Caco-2 (cell line): ENCODE measurements at regions of chr2 and their contacts with region 1.

Region 1: DNA sequence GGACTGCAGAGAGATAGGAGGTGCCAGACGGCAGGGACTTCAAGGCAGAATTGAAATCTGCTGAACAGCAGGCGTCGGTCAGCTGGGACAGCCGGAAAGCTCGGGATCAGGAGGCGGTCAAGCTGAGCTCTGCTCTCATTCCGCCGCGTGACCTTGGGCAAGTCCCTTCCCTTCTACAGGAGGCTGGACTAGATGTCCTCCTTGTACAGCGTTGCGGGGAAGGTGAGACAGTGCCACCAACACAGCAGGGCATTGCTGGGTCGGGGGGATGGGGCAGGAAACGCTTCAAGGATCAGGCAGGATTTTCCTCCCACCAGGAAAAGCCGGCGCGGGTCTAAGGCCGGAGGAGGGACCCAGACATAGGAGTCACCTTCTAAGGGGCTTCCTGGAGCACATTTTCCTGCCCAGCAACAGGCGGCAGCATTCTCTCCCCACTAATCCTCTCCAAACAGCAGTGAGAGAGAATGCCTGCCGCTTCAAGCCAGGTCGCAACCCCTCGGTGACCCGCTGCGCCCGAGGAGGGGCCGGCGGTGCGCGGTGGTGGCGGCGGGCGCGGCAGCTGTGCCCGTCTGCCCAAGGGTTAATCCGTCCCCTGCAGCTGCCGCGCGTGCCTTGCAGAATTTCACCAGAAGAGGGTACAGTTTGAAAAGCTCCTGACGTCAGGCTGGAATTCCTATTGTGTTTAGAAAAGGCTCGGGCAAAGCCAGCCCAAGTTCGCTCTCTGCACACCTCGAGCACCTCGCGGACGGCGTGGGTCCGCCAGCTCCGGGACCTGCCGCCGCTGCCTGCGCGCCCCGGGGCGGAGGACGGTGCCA is at the start of gene KCNF1:
- DNase-seq: peak; percentile 64 to 72
- H3K4me3 ChIP-seq: peak within 1 kb of the TSS; percentile 42
- H3K4me3 Mint-ChIP-seq: peak within 1 kb of the TSS; percentile 58
- H3K27ac Mint-ChIP-seq: no peak within 1 kb of the TSS
- H3K4me1 ChIP-seq: no peaks in the 10 kb centered on the region
- H3K4me1 Mint-ChIP-seq: peaks cover 7% of the 10 kb centered on the region
- H3K27me3 ChIP-seq: no peaks in the 10 kb centered on the region
- H3K27me3 Mint-ChIP-seq: peaks cover 10% of the 10 kb centered on the region
- CTCF ChIP-seq: peak; percentile 25 to 26
- total RNA-seq, gene KCNF1: 0.28 and 0.29 TPM in 2 replicates

Region 2: GRCh38 chr2:10891390-10891789 is 20.1 kb before region 1 on chr2:
- CTCF ChIA-PET with region 1: interaction called, 10 read pairs
- POLR2A ChIA-PET with region 1: no interaction called
- intact Hi-C with region 1: no loop called
- DNase-seq: no peak
- H3K4me3 ChIP-seq: no peak overlapping the region
- H3K4me3 Mint-ChIP-seq: no peak overlapping the region
- H3K27ac Mint-ChIP-seq: no peak overlapping the region
- H3K4me1 ChIP-seq: no peaks in the 10 kb centered on the region
- H3K4me1 Mint-ChIP-seq: no peaks in the 10 kb centered on the region
- H3K27me3 ChIP-seq: no peaks in the 10 kb centered on the region
- H3K27me3 Mint-ChIP-seq: peaks cover 10% of the 10 kb centered on the region
- CTCF ChIP-seq: no peak

Region 3: GRCh38 chr2:10900216-10901109 is 11.0 kb before region 1 on chr2:
- CTCF ChIA-PET with region 1: interaction called, 11 read pairs
- POLR2A ChIA-PET with region 1: no interaction called
- intact Hi-C with region 1: no loop called
- DNase-seq: peak; percentile 70 to 81
- H3K4me3 ChIP-seq: no peak overlapping the region
- H3K4me3 Mint-ChIP-seq: no peak overlapping the region
- H3K27ac Mint-ChIP-seq: no peak overlapping the region
- H3K4me1 ChIP-seq: no peaks in the 10 kb centered on the region
- H3K4me1 Mint-ChIP-seq: peaks cover 7% of the 10 kb centered on the region
- H3K27me3 ChIP-seq: no peaks in the 10 kb centered on the region
- H3K27me3 Mint-ChIP-seq: peaks cover 2% of the 10 kb centered on the region
- CTCF ChIP-seq: peak; percentile 60 to 75

Region 4: GRCh38 chr2:11145350-11145749 is 233.9 kb after region 1 on chr2:
- CTCF ChIA-PET with region 1: no interaction called
- POLR2A ChIA-PET with region 1: no interaction called
- intact Hi-C with region 1: no loop called
- DNase-seq: no peak
- H3K4me3 ChIP-seq: no peak overlapping the region
- H3K4me3 Mint-ChIP-seq: no peak overlapping the region
- H3K27ac Mint-ChIP-seq: no peak overlapping the region
- H3K4me1 ChIP-seq: no peaks in the 10 kb centered on the region
- H3K4me1 Mint-ChIP-seq: no peaks in the 10 kb centered on the region
- H3K27me3 ChIP-seq: no peaks in the 10 kb centered on the region
- H3K27me3 Mint-ChIP-seq: peaks cover 6% of the 10 kb centered on the region
- CTCF ChIP-seq: no peak